ENCODE measurements at regions of chr19 and their contacts with region 1.

Region 1: DNA sequence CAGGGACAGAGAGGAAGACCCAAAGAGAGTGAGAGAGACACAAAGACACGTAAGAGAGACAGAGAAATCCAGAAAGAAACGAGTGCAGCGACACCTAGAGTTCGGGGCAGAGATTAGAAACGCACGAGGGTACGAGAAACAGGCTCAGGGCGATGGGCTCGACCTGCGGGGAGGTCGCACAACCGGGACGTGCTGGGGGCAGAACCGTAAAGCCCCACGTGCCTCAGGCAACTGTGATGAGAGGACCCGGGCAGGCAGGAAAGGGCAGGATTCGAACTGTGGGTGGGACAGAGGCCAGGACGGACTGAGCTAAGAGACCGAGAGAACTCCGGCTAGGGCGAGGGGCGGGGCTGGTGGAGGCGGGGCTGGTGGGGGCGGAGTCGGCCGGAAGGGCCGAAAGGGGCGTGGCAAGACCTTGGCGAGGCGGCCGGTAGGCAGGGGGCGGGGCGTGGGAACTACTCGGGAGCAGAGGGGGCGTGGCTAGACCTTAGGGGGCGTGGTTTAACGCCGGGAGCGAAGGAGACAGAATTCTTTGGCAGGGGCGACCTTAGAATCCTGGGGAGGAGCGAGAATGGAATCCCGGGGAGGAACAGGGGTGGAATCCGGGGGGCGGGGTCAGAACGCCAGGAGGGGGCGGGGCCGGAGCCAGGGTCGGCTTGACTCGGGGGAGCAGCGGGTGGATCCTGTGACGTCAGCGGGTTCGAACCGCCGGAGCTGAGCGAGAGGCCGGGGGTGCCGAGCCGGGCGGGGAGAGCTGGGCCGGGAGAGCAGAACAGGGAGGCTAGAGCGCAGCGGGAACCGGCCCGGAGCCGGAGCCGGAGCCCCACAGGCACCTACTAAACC is at the start of gene NECTIN2:
- DNase-seq: peak; percentile 98
- ATAC-seq: peak; percentile 77
- H3K4me3 ChIP-seq: peak within 1 kb of the TSS; percentile 97
- H3K27ac ChIP-seq: peak within 1 kb of the TSS; percentile 97
- H3K4me1 ChIP-seq: peaks cover 12% of the 10 kb centered on the region
- H3K27me3 ChIP-seq: no peaks in the 10 kb centered on the region
- CTCF ChIP-seq: peak; percentile 79
- POLR2A ChIP-seq: peak; percentile 94
- RAD21 ChIP-seq: peak; percentile 56
- total RNA-seq, gene NECTIN2: 77.8 and 78.0 TPM in 2 replicates

Region 2: DNA sequence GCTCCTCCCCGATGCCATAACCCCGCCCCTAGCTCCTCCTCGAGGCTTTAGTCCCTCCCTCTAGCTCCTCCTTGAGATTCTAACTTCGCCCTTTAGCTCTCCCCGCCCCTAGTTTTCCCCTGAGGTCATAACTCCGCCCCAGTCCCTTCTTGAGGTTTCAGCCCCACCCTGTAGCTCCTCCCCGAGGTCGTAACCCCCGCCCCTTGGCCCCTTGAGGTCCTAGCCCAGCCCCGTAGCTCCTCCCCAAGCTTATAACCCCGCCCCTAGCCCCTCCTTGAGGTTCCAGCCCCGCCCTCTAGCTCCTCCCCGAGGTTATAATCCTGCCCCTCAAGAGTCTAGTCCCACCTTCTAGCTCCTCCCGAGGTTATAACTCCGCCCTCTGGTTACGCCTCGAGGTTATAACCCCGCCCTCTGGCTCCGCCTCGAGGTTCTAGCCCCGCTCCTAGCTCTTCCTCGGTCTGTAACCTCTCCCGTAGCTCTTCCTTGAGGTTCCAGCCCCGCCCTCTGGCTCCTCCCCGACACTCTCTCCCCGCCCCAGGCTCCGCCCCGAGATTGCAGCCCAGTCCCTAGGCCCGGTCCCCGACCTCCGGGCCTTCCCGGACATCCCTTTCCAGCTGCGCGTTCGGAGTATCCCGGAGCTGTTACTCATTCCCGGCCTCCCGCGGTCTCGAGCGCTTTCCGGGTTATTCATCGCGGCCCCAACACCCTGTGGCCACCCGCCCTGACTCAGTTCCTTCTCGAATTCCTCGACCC is 1177.3 kb before region 1 on chr19:
- CTCF ChIA-PET with region 1: no interaction called
- POLR2A ChIA-PET with region 1: interaction called, 11 read pairs
- dilution Hi-C with region 1: no loop called
- in situ Hi-C with region 1: no loop called
- intact Hi-C with region 1: no loop called
- DNase-seq: peak; percentile 99
- ATAC-seq: peak; percentile 90
- H3K4me3 ChIP-seq: peak overlapping the region; percentile 90
- H3K27ac ChIP-seq: peak overlapping the region; percentile 84
- H3K4me1 ChIP-seq: peaks cover 8% of the 10 kb centered on the region
- H3K27me3 ChIP-seq: no peaks in the 10 kb centered on the region
- CTCF ChIP-seq: no peak
- POLR2A ChIP-seq: no peak; the same call in 1 of the 2 replicates
- RAD21 ChIP-seq: no peak

Region 3: GRCh38 chr19:44587963-44588770 is 257.7 kb before region 1 on chr19:
- CTCF ChIA-PET with region 1: no interaction called
- POLR2A ChIA-PET with region 1: no interaction called
- dilution Hi-C with region 1: no loop called
- in situ Hi-C with region 1: no loop called
- intact Hi-C with region 1: loop called (anchors 1 kb)
- DNase-seq: peak; percentile 96
- ATAC-seq: peak; percentile 84
- H3K4me3 ChIP-seq: no peak overlapping the region
- H3K27ac ChIP-seq: peak overlapping the region; percentile 99
- H3K4me1 ChIP-seq: peaks cover 16% of the 10 kb centered on the region
- H3K27me3 ChIP-seq: no peaks in the 10 kb centered on the region
- CTCF ChIP-seq: peak; percentile 71
- POLR2A ChIP-seq: no peak; the same call in 1 of the 2 replicates
- RAD21 ChIP-seq: peak; percentile 75

Region 4: DNA sequence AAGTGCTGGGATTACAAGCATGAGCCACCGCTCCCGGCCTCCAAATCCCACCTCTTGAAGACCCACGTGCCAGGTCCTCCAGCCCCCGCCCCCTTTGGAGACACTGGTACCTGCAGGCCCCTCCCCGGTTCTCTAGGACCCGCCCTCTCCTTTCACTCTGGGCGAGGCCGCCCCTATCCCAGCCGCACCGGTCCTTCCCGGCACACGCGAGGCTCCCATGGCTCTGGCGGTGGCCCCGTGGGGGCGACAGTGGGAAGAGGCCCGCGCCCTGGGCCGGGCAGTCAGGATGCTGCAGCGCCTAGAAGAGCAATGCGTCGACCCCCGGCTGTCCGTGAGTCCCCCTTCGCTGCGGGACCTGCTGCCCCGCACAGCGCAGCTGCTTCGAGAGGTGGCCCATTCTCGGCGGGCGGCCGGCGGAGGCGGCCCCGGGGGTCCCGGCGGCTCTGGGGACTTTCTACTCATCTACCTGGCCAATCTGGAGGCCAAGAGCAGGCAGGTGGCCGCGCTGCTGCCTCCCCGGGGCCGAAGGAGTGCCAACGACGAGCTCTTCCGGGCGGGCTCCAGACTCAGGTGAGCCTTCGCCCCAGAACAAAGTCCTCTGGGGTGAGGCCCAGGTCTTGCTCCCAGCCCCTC is 68.0 kb before region 1 on chr19 and contains the start of gene CBLC:
- CTCF ChIA-PET with region 1: interaction called, 5 read pairs
- POLR2A ChIA-PET with region 1: no interaction called
- dilution Hi-C with region 1: no loop called
- in situ Hi-C with region 1: loop called (anchors 5 kb)
- intact Hi-C with region 1: no loop called
- DNase-seq: no peak
- ATAC-seq: no peak
- H3K4me3 ChIP-seq: no peak within 1 kb of the TSS
- H3K27ac ChIP-seq: no peak within 1 kb of the TSS; the same call in 1 of the 2 replicates
- H3K4me1 ChIP-seq: peaks cover 12% of the 10 kb centered on the region
- H3K27me3 ChIP-seq: no peaks in the 10 kb centered on the region
- CTCF ChIP-seq: no peak
- POLR2A ChIP-seq: no peak
- RAD21 ChIP-seq: no peak
- total RNA-seq, gene CBLC: not detected in 2 replicates

Region 5: DNA sequence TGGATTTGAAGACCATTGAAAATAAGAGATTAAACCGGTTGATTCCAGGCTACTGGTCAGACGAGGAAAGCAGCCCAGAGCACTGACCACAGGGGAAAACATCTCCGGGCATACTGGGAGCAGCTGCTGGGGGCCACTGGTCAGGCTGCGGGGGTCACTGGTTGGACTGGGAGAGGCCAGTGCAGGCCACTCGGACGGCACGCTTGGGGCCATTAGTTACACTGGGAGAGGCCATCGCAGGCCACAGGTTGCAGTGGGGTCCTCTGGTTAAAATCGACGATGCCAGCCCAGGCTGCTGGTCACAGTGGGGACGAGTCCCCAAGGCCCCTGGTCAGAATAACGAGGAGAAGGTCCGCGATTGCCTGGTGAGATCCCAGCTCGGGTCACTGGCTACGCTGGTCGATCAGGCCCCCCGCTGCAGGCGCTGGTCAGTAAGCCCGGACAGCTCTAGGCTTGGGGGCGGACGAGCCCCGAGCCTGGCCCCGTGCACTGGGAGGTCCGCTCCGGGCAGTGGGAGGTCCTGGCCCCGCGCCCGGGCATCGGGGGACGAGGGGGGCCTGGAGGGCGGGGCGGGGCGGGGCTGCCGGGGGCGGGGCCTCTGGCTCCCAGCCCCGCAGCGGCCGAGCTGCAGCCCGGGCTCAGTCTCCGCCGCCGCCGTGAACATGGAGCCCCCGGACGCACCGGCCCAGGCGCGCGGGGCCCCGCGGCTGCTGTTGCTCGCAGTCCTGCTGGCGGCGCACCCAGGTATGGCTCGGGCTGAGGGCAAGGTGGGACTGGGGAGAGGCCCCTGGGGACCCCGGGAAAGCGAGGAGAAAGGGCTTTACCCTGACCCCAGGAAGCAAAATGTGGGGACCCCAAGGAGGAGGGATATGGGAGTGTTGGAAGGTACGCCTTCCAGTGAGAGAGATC is 37.1 kb before region 1 on chr19 and contains the start of gene BCAM:
- CTCF ChIA-PET with region 1: interaction called, 3 read pairs
- POLR2A ChIA-PET with region 1: no interaction called
- dilution Hi-C with region 1: no loop called
- in situ Hi-C with region 1: no loop called
- intact Hi-C with region 1: loop called (anchors 2 kb)
- DNase-seq: peak; percentile 54
- ATAC-seq: peak; percentile 89
- H3K4me3 ChIP-seq: peak within 1 kb of the TSS; percentile 80
- H3K27ac ChIP-seq: peak within 1 kb of the TSS; percentile 53
- H3K4me1 ChIP-seq: peaks cover 15% of the 10 kb centered on the region
- H3K27me3 ChIP-seq: peaks cover 5% of the 10 kb centered on the region; the same call in 1 of the 2 replicates
- CTCF ChIP-seq: no peak
- POLR2A ChIP-seq: no peak
- RAD21 ChIP-seq: no peak
- total RNA-seq, gene BCAM: 2.3 and 2.8 TPM in 2 replicates

Region 6: DNA sequence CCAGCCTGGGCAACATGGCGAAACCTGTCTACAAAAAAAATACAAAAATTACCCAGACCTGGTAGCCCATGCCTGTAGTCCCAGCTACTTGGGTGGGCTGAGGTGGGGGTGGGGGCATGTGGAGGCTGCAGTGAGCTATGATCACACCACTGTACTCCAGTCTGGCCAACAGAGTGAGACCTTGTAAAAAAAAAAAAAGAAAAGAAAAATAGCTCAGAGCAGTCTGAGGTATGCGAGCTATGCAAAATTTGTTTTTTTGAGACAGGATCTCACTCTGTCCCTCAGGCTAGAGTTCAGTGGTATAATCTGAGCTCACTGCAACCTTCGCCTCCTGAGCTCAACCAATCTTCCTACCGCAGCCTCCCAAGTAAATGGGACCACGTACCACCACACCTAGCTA is 38.1 kb after region 1 on chr19:
- CTCF ChIA-PET with region 1: no interaction called
- POLR2A ChIA-PET with region 1: no interaction called
- dilution Hi-C with region 1: no loop called
- in situ Hi-C with region 1: no loop called
- intact Hi-C with region 1: no loop called
- DNase-seq: no peak
- ATAC-seq: peak; percentile 84
- H3K4me3 ChIP-seq: no peak overlapping the region
- H3K27ac ChIP-seq: peak overlapping the region; percentile 29; the same call in 1 of the 2 replicates
- H3K4me1 ChIP-seq: 0 out of 2 replicates have a peak, but pooled peaks cover 1% of the 10 kb centered on the region
- H3K27me3 ChIP-seq: no peaks in the 10 kb centered on the region
- CTCF ChIP-seq: no peak
- POLR2A ChIP-seq: no peak
- RAD21 ChIP-seq: no peak